ENCODE measurements at regions of chr11 and their contacts with region 1.

Region 1: GRCh38 chr11:120235024-120235861 is 4.7 kb upstream of the POU2F3 start:
- DNase-seq: no peak
- ATAC-seq: peak; percentile 95
- H3K4me3 ChIP-seq: no peak overlapping the region
- H3K27ac ChIP-seq: no peak overlapping the region
- H3K4me1 ChIP-seq: peaks cover 3% of the 10 kb centered on the region; the same call in 1 of the 2 replicates
- H3K27me3 ChIP-seq: peaks cover 7 to 8% of the 10 kb centered on the region in 2 experiments
- CTCF ChIP-seq: peak; percentile 89 to 98 (median 95); a peak in 5 of 6 replicates
- EP300 ChIP-seq: no peak
- POLR2A ChIP-seq: no peak
- RAD21 ChIP-seq: peak; percentile 98

Region 2: DNA sequence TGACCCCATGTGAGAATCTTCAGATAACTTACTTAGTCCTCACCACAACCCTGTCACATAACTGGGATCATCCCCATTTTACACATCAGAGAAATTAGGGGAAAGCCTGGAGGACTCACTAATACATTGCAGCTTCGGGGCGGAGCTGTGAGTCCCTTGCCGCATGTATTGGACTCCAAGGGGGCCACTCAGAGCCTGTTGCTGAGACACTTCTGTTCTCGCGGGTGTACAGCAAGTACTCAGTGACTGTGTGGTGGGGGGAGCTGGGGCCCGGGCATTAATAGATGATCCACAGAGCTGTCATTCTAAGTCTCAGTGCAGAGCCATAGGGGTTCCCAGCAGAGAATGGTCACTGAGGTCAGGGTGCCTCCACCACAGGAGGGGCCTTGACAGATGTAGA is 10.9 kb before region 1 on chr11:
- CTCF ChIA-PET with region 1: interaction called, 10 read pairs
- POLR2A ChIA-PET with region 1: no interaction called
- RAD21 ChIA-PET with region 1: interaction called, 10 read pairs
- SMC1A ChIA-PET with region 1: interaction called, 3 read pairs
- in situ Hi-C with region 1: no loop called
- intact Hi-C with region 1: no loop called
- DNase-seq: no peak
- ATAC-seq: no peak
- H3K4me3 ChIP-seq: no peak overlapping the region
- H3K27ac ChIP-seq: no peak overlapping the region
- H3K4me1 ChIP-seq: peaks cover 8% of the 10 kb centered on the region
- H3K27me3 ChIP-seq: no peaks in the 10 kb centered on the region
- CTCF ChIP-seq: no peak
- EP300 ChIP-seq: no peak
- POLR2A ChIP-seq: no peak
- RAD21 ChIP-seq: no peak

Region 3: DNA sequence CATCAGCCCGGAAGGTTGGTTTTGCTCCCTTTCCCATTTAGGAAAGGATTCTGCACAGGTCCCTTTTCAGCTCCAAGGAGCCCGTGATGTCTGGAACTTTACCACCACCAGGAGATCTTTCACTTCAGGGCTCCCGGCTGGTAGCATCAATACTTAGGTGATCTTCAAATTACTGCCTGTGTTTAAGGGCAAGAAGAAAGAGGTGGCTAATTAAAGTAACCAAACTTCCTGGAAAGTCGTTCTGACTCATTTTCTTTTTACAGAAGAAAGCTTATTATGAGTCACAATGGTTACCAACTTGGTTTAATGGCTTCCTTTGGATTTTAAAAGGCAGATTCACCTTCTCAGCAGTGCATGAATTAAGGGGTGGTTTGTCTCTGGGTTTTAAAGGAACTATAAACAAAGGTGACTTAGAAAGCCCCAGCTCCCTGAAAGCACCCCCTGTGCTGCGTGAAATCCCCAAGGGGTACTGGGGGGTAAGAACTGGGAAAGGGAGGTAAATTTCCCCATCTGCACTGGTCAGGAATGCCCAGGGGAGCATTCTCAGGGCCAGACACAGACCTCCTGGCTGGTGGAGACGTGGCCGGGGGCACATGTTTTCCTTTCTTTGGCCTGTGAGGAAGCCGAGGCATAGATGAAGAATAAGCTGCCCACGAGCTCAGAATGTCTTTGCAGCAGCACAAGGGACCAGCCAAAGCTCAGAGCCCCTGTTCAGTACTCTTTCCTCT is 13.5 kb after region 1 on chr11:
- CTCF ChIA-PET with region 1: interaction called, 111 read pairs
- POLR2A ChIA-PET with region 1: interaction called, 3 read pairs
- RAD21 ChIA-PET with region 1: interaction called, 44 read pairs
- SMC1A ChIA-PET with region 1: interaction called, 88 read pairs
- in situ Hi-C with region 1: no loop called
- intact Hi-C with region 1: no loop called
- DNase-seq: peak; percentile 93
- ATAC-seq: peak; percentile 87
- H3K4me3 ChIP-seq: peak overlapping the region; percentile 34; the same call in 1 of the 2 replicates
- H3K27ac ChIP-seq: peak overlapping the region; percentile 39
- H3K4me1 ChIP-seq: peaks cover 37% of the 10 kb centered on the region
- H3K27me3 ChIP-seq: no peaks in the 10 kb centered on the region; a peak in 1 of 4 replicates
- CTCF ChIP-seq: no peak
- EP300 ChIP-seq: peak; percentile 91 to 95; a peak in 3 of 4 replicates
- POLR2A ChIP-seq: no peak
- RAD21 ChIP-seq: no peak

Region 4: DNA sequence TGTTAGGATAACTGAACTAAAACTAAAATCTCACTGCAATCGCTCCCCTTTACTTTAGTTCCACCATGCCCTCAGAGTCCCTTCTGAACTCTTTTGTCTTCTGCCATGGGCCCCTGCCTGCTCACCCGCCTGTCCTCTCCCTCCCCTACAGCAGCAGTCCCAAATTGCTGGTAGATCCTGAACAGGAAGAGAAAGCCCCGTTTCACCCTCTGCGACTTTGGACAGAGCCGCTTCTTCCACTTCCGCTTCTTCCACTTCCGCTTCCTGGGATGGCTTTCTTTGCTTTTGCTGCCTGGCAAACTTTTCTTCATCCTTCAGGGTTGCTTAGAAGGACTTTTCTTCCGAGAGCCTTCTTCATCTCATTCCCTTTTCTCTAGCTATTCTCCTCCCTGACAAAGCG is 54.2 kb after region 1 on chr11:
- CTCF ChIA-PET with region 1: interaction called, 783 read pairs
- POLR2A ChIA-PET with region 1: no interaction called
- RAD21 ChIA-PET with region 1: interaction called, 3 read pairs
- SMC1A ChIA-PET with region 1: interaction called, 372 read pairs
- in situ Hi-C with region 1: no loop called
- intact Hi-C with region 1: no loop called
- DNase-seq: no peak
- ATAC-seq: no peak
- H3K4me3 ChIP-seq: no peak overlapping the region
- H3K27ac ChIP-seq: no peak overlapping the region
- H3K4me1 ChIP-seq: no peaks in the 10 kb centered on the region
- H3K27me3 ChIP-seq: no peaks in the 10 kb centered on the region; a peak in 1 of 4 replicates
- CTCF ChIP-seq: no peak
- EP300 ChIP-seq: no peak
- POLR2A ChIP-seq: no peak
- RAD21 ChIP-seq: no peak

Region 5: DNA sequence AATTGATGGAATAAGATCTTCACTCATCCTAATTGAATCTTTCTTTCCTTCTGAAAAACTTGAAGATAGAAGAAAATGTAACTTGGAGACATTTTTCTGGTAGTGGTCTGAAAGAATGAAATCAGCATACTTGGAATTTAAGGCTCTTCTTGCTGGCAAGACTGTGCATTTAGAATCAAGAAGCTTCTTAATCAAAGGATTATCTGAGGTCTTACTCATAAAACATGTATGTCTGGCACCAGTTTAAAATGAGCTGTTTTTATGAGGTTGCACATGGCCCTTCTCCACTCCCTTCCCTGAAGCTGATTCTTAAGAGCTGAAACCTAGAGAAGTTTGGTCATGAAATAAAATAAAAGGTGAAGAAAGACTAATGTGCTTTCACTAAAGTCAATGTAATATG is 178.2 kb after region 1 on chr11:
- CTCF ChIA-PET with region 1: no interaction called
- POLR2A ChIA-PET with region 1: no interaction called
- RAD21 ChIA-PET with region 1: no interaction called
- SMC1A ChIA-PET with region 1: no interaction called
- in situ Hi-C with region 1: no loop called
- intact Hi-C with region 1: no loop called
- DNase-seq: no peak
- ATAC-seq: no peak
- H3K4me3 ChIP-seq: no peak overlapping the region
- H3K27ac ChIP-seq: no peak overlapping the region
- H3K4me1 ChIP-seq: no peaks in the 10 kb centered on the region
- H3K27me3 ChIP-seq: no peaks in the 10 kb centered on the region
- CTCF ChIP-seq: no peak
- EP300 ChIP-seq: no peak
- POLR2A ChIP-seq: no peak
- RAD21 ChIP-seq: no peak